ENCODE measurements at regions of chr17 and their contacts with region 1.

Region 1: GRCh38 chr17:34980681-34981537 is 597 bp downstream of the LIG3 start:
- DNase-seq: peak in 8 of 9 experiments; percentile 13 to 90 (median 75)
- ATAC-seq: peak; percentile 84
- H3K4me3 ChIP-seq: peak overlapping the region; percentile 80 to 86
- H3K4me3 Mint-ChIP-seq: peak overlapping the region; percentile 92
- H3K27ac ChIP-seq: peak overlapping the region; percentile 93 to 98
- H3K27ac Mint-ChIP-seq: peak overlapping the region; percentile 98
- H3K4me1 ChIP-seq: peaks cover 26% of the 10 kb centered on the region
- H3K4me1 Mint-ChIP-seq: peaks cover 55% of the 10 kb centered on the region
- H3K27me3 ChIP-seq: no peaks in the 10 kb centered on the region
- H3K27me3 Mint-ChIP-seq: no peaks in the 10 kb centered on the region
- CTCF ChIP-seq: no peak

Region 2: GRCh38 chr17:34420254-34420766 is 560.6 kb before region 1 on chr17:
- CTCF ChIA-PET with region 1: no interaction called
- POLR2A ChIA-PET with region 1: no interaction called
- intact Hi-C with region 1: loop called in 1 of 2 experiments (anchors 5 kb)
- DNase-seq: peak; percentile 26 to 79 (median 67)
- ATAC-seq: peak; percentile 64
- H3K4me3 ChIP-seq: no peak overlapping the region
- H3K4me3 Mint-ChIP-seq: no peak overlapping the region
- H3K27ac ChIP-seq: no peak overlapping the region
- H3K27ac Mint-ChIP-seq: no peak overlapping the region
- H3K4me1 ChIP-seq: no peaks in the 10 kb centered on the region
- H3K4me1 Mint-ChIP-seq: no peaks in the 10 kb centered on the region
- H3K27me3 ChIP-seq: peaks cover 0 to 4% of the 10 kb centered on the region in 2 experiments
- H3K27me3 Mint-ChIP-seq: peaks cover 40% of the 10 kb centered on the region
- CTCF ChIP-seq: peak; percentile 96

Region 3: GRCh38 chr17:34542700-34543336 is 438.1 kb before region 1 on chr17:
- CTCF ChIA-PET with region 1: no interaction called
- POLR2A ChIA-PET with region 1: no interaction called
- intact Hi-C with region 1: loop called in 1 of 2 experiments (anchors 2 kb)
- DNase-seq: peak in 8 of 9 experiments; percentile 16 to 71 (median 59)
- ATAC-seq: no peak
- H3K4me3 ChIP-seq: no peak overlapping the region
- H3K4me3 Mint-ChIP-seq: no peak overlapping the region
- H3K27ac ChIP-seq: no peak overlapping the region
- H3K27ac Mint-ChIP-seq: no peak overlapping the region
- H3K4me1 ChIP-seq: no peaks in the 10 kb centered on the region
- H3K4me1 Mint-ChIP-seq: no peaks in the 10 kb centered on the region
- H3K27me3 ChIP-seq: no peaks in the 10 kb centered on the region
- H3K27me3 Mint-ChIP-seq: peaks cover 32% of the 10 kb centered on the region
- CTCF ChIP-seq: peak; percentile 71

Region 4: DNA sequence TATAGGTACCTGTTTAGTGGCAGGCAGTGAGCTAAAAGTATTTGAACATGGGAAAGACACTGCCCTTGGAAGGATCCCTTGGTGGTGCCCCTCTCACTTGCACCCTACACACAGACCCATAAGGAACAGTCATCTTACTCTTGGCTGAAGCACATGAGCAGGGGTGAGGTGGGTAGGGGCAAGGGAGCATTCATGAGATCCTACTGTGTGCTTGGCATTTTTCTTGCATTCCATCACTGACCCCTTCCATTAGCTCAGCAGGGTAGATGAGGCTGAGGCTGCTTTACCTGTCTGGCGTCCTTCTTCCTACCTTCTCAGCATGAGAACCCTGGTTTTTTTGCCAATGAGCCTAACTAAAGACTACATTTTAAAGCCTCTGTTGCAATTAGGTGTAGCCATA is 67.9 kb before region 1 on chr17:
- CTCF ChIA-PET with region 1: no interaction called
- POLR2A ChIA-PET with region 1: no interaction called
- intact Hi-C with region 1: no loop called
- DNase-seq: no peak
- ATAC-seq: no peak
- H3K4me3 ChIP-seq: no peak overlapping the region
- H3K4me3 Mint-ChIP-seq: no peak overlapping the region
- H3K27ac ChIP-seq: no peak overlapping the region
- H3K27ac Mint-ChIP-seq: no peak overlapping the region
- H3K4me1 ChIP-seq: no peaks in the 10 kb centered on the region
- H3K4me1 Mint-ChIP-seq: no peaks in the 10 kb centered on the region
- H3K27me3 ChIP-seq: no peaks in the 10 kb centered on the region
- H3K27me3 Mint-ChIP-seq: no peaks in the 10 kb centered on the region
- CTCF ChIP-seq: no peak

Region 5: DNA sequence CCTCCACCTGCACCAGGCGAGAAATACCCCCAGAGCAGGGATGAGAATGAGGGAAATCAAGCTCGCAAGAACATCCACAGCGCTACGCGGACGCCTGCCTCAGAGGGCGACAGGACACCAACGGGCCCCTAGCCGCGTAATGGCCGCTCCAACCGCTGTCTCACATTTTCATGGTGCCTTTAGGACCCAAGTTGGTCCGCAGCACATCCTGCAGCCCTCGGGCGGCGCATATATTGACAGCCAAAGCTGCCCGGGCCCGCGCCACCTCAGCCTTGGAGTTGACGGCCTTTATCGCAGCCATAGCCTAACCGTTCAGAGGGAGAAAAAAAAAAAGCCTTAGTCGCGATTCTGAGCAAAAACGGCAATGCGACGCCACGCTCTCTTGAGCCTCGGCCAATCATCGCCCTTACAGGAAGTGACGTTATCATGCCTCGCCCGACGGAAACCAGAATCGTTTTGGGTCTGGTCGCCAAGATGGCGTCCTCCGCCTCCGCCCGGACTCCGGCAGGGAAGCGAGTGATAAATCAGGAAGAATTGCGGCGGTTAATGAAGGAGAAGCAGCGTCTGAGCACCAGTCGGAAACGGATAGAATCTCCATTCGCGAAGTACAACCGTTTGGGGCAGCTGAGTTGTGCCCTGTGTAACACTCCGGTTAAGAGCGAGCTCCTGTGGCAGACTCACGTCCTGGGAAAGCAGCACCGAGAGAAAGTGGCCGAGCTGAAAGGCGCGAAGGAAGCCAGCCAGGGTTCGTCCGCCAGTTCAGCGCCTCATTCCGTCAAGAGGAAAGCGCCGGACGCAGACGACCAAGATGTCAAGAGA is 19.6 kb before region 1 on chr17 and contains the starts of genes CCT6B and ZNF830:
- CTCF ChIA-PET with region 1: interaction called, 3 read pairs
- POLR2A ChIA-PET with region 1: interaction called, 7 read pairs
- intact Hi-C with region 1: loop called (anchors 1 kb)
- DNase-seq: peak; percentile 75 to 97 (median 92)
- ATAC-seq: peak; percentile 88
- H3K4me3 ChIP-seq: peak within 1 kb of the TSS; percentile 72 to 78
- H3K4me3 Mint-ChIP-seq: peak within 1 kb of the TSS; percentile 100
- H3K27ac ChIP-seq: peak within 1 kb of the TSS; percentile 84 to 99
- H3K27ac Mint-ChIP-seq: peak within 1 kb of the TSS; percentile 99
- H3K4me1 ChIP-seq: peaks cover 22% of the 10 kb centered on the region
- H3K4me1 Mint-ChIP-seq: peaks cover 40% of the 10 kb centered on the region
- H3K27me3 ChIP-seq: no peaks in the 10 kb centered on the region
- H3K27me3 Mint-ChIP-seq: peaks cover 6% of the 10 kb centered on the region
- CTCF ChIP-seq: no peak
- total RNA-seq, gene CCT6B: 4.0 to 5.9 TPM
- total RNA-seq, gene ZNF830: 43.6 to 45.0 TPM

Region 6: GRCh38 chr17:35578197-35578928 is 597.5 kb after region 1 on chr17 and contains the start of gene PEX12:
- CTCF ChIA-PET with region 1: no interaction called
- POLR2A ChIA-PET with region 1: interaction called, 3 read pairs
- intact Hi-C with region 1: loop called in 1 of 2 experiments (anchors 5 kb)
- DNase-seq: peak; percentile 70 to 96 (median 89)
- ATAC-seq: peak; percentile 93
- H3K4me3 ChIP-seq: peak within 1 kb of the TSS; percentile 69 to 88
- H3K4me3 Mint-ChIP-seq: peak within 1 kb of the TSS; percentile 93
- H3K27ac ChIP-seq: peak within 1 kb of the TSS; percentile 88 to 94
- H3K27ac Mint-ChIP-seq: peak within 1 kb of the TSS; percentile 98
- H3K4me1 ChIP-seq: peaks cover 18% of the 10 kb centered on the region
- H3K4me1 Mint-ChIP-seq: peaks cover 29% of the 10 kb centered on the region
- H3K27me3 ChIP-seq: no peaks in the 10 kb centered on the region
- H3K27me3 Mint-ChIP-seq: no peaks in the 10 kb centered on the region
- CTCF ChIP-seq: no peak
- total RNA-seq, gene PEX12: 2.7 to 3.2 TPM

Region 7: GRCh38 chr17:35587074-35587971 is 606.4 kb after region 1 on chr17 and contains the start of gene AP2B1:
- CTCF ChIA-PET with region 1: no interaction called
- POLR2A ChIA-PET with region 1: no interaction called
- intact Hi-C with region 1: loop called in 1 of 2 experiments (anchors 1 kb)
- DNase-seq: peak; percentile 96 to 100 (median 97)
- ATAC-seq: peak; percentile 98
- H3K4me3 ChIP-seq: peak within 1 kb of the TSS; percentile 84 to 92
- H3K4me3 Mint-ChIP-seq: peak within 1 kb of the TSS; percentile 99
- H3K27ac ChIP-seq: peak within 1 kb of the TSS; percentile 86 to 93
- H3K27ac Mint-ChIP-seq: peak within 1 kb of the TSS; percentile 98
- H3K4me1 ChIP-seq: peaks cover 21% of the 10 kb centered on the region
- H3K4me1 Mint-ChIP-seq: peaks cover 38% of the 10 kb centered on the region
- H3K27me3 ChIP-seq: no peaks in the 10 kb centered on the region
- H3K27me3 Mint-ChIP-seq: no peaks in the 10 kb centered on the region
- CTCF ChIP-seq: no peak
- total RNA-seq, gene AP2B1: 58.7 to 65.7 TPM

Region 8: DNA sequence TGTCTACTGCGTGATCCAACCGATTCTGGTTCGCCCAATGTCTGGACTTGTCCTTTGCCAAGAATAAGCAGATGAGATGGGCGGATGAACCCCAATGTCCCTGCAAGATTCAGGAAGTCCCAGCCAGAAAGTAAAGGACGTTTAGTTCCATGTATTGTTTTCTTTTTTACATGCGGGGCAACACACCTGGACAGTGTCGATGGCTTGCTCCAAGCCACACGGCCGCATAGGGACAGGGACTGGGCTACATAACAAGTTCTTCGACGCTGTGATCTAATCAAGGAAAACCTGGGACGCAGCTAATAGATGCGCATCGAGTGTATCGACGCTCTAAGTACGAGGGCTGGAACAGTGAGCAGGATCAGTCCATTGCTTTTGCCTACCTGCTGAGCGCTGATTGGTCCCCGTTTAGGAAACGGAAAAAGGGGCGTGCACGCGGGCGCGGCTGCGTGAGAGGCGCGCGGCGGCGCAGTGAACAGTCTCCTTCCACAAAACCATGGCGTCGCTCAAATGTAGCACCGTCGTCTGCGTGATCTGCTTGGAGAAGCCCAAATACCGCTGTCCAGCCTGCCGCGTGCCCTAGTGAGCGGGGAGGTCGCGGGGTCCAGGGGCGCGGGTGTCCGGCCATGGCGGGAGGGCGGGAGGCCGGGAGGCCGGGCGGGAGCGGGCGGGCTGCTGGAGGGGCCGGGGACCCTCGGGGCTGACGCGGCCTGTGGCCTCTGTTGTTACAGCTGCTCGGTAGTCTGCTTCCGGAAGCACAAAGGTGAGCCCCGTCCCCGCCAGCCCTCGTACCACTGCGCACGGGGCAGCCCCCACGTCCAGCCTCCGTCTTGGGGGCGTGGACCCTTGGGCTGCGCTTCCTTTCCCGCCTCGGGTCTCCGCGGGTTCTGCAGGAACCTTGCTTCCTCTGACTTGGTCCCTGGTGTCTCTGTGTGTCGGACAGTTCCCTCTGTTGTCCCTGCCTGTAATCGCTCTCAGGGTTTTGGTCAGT is 1505.6 kb after region 1 on chr17 and contains the start of gene ZNHIT3:
- CTCF ChIA-PET with region 1: no interaction called
- POLR2A ChIA-PET with region 1: no interaction called
- intact Hi-C with region 1: loop called in 1 of 2 experiments (anchors 2 kb)
- DNase-seq: peak; percentile 80 to 96 (median 90)
- ATAC-seq: peak; percentile 96
- H3K4me3 ChIP-seq: peak within 1 kb of the TSS; percentile 64 to 97
- H3K4me3 Mint-ChIP-seq: peak within 1 kb of the TSS; percentile 100
- H3K27ac ChIP-seq: peak within 1 kb of the TSS; percentile 69 to 70
- H3K27ac Mint-ChIP-seq: peak within 1 kb of the TSS; percentile 99
- H3K4me1 ChIP-seq: peaks cover 45% of the 10 kb centered on the region
- H3K4me1 Mint-ChIP-seq: peaks cover 55% of the 10 kb centered on the region
- H3K27me3 ChIP-seq: peaks cover 0 to 10% of the 10 kb centered on the region in 2 experiments
- H3K27me3 Mint-ChIP-seq: peaks cover 10% of the 10 kb centered on the region
- CTCF ChIP-seq: no peak
- total RNA-seq, gene ZNHIT3: 82.2 to 87.1 TPM